ENCODE measurements at regions of chr1 and their contacts with region 1.

Region 1: GRCh38 chr1:184222652-184223052 is 164.2 kb upstream of the C1orf21 start:
- DNase-seq: peak; percentile 55
- ATAC-seq: peak; percentile 88
- H3K4me3 ChIP-seq: no peak overlapping the region; the same call in 1 of the 2 replicates
- H3K27ac ChIP-seq: no peak overlapping the region
- H3K4me1 ChIP-seq: no peaks in the 10 kb centered on the region
- H3K27me3 ChIP-seq: peaks cover 11% of the 10 kb centered on the region
- CTCF ChIP-seq: peak; percentile 89
- POLR2A ChIP-seq: no peak; the same call in 1 of the 2 replicates
- RAD21 ChIP-seq: peak; percentile 87

Region 2: GRCh38 chr1:183655562-183656075 is 567.0 kb before region 1 on chr1:
- CTCF ChIA-PET with region 1: interaction called, 3 read pairs
- POLR2A ChIA-PET with region 1: no interaction called
- dilution Hi-C with region 1: no loop called
- in situ Hi-C with region 1: no loop called
- intact Hi-C with region 1: loop called (anchors 10 kb)
- DNase-seq: peak; percentile 84
- ATAC-seq: peak; percentile 96
- H3K4me3 ChIP-seq: no peak overlapping the region
- H3K27ac ChIP-seq: no peak overlapping the region
- H3K4me1 ChIP-seq: peaks cover 6% of the 10 kb centered on the region
- H3K27me3 ChIP-seq: no peaks in the 10 kb centered on the region
- CTCF ChIP-seq: peak; percentile 92
- POLR2A ChIP-seq: 0 out of 2 replicates have a peak, but pooled peaks have one; percentile 32
- RAD21 ChIP-seq: peak; percentile 92

Region 3: DNA sequence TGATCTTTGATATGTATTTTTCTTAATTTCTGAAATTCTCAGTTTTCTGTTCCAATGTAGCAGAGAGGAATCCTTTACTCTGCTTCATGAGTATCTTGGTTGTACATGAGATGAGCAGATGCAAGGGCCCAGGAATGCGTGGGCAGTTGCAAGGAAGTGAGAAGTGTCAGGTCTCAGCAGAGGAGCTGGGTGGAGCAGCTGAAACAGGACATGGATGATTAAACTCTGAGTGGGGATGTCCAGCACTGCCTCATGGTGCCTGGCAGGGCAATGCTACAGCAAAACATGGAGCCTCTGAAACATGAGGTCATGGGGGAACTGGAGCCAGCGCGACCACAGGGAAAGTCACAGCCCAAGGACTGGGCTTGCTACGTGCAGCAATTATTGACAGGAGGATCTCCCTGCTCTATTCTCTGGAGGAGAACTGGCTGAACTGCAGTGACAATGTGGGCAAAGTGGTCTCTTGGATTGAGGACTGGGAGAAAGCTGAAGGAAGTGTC is 233.5 kb before region 1 on chr1:
- CTCF ChIA-PET with region 1: no interaction called
- POLR2A ChIA-PET with region 1: no interaction called
- dilution Hi-C with region 1: no loop called
- in situ Hi-C with region 1: no loop called
- intact Hi-C with region 1: no loop called
- DNase-seq: peak; percentile 95
- ATAC-seq: peak; percentile 91
- H3K4me3 ChIP-seq: no peak overlapping the region
- H3K27ac ChIP-seq: peak overlapping the region; percentile 32; the same call in 1 of the 2 replicates
- H3K4me1 ChIP-seq: peaks cover 14% of the 10 kb centered on the region
- H3K27me3 ChIP-seq: no peaks in the 10 kb centered on the region
- CTCF ChIP-seq: no peak
- POLR2A ChIP-seq: no peak
- RAD21 ChIP-seq: peak; percentile 10; the same call in 1 of the 2 replicates

Region 4: GRCh38 chr1:184075055-184076029 is 147.3 kb before region 1 on chr1:
- CTCF ChIA-PET with region 1: interaction called, 6 read pairs
- POLR2A ChIA-PET with region 1: no interaction called
- dilution Hi-C with region 1: no loop called
- in situ Hi-C with region 1: loop called (anchors 5 kb)
- intact Hi-C with region 1: loop called (anchors 1 kb)
- DNase-seq: peak; percentile 75
- ATAC-seq: peak; percentile 87
- H3K4me3 ChIP-seq: no peak overlapping the region
- H3K27ac ChIP-seq: no peak overlapping the region
- H3K4me1 ChIP-seq: peaks cover 3% of the 10 kb centered on the region; the same call in 1 of the 2 replicates
- H3K27me3 ChIP-seq: no peaks in the 10 kb centered on the region
- CTCF ChIP-seq: peak; percentile 91
- POLR2A ChIP-seq: peak; percentile 26; the same call in 1 of the 2 replicates
- RAD21 ChIP-seq: peak; percentile 98

Region 5: DNA sequence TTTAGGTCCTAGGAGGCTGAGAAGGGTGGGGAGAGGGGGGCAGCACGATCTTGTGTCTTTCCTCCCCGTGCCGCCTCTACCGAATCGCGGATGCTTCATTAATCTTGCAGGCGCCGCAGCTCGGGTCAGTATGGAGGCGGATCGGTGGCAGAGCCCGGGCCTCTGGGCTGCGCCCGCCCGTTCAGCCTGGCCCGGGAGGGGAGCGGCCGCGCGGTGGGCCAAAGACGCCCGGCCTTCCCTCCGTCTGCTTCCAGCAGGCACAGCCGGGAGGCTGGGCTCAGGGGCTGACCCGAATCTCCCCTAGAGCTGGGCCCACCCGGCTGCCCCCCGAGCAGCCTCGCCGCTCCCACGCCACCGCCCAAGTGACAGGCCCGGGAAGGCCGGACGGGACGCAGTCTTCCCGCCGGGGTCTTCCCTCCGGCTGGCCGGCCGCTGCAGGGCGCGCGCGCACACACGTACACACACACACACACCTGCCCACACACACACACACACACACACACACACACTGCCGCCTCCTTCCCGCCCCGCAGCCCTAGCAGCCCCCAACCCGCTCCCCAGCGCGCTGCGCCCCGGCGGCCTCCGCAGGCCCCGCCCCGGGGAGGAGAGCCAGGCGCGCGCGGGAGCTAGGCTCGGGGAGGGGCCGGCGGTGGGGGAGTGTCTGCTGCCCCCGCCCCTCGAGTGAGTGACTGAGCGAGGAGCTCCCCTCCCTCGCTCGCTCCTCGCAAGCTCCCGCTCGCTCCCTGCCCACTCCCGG is 163.8 kb after region 1 on chr1 and contains the start of gene C1orf21:
- CTCF ChIA-PET with region 1: no interaction called
- POLR2A ChIA-PET with region 1: no interaction called
- dilution Hi-C with region 1: no loop called
- in situ Hi-C with region 1: no loop called
- intact Hi-C with region 1: loop called (anchors 5 kb)
- DNase-seq: peak; percentile 84
- ATAC-seq: peak; percentile 96
- H3K4me3 ChIP-seq: peak within 1 kb of the TSS; percentile 61
- H3K27ac ChIP-seq: peak within 1 kb of the TSS; percentile 60
- H3K4me1 ChIP-seq: peaks cover 4% of the 10 kb centered on the region; the same call in 1 of the 2 replicates
- H3K27me3 ChIP-seq: peaks cover 7% of the 10 kb centered on the region
- CTCF ChIP-seq: no peak
- POLR2A ChIP-seq: no peak; the same call in 1 of the 2 replicates
- RAD21 ChIP-seq: no peak
- total RNA-seq, gene C1orf21: 9.9 and 15.8 TPM in 2 replicates

Region 6: GRCh38 chr1:184610876-184611595 is 388.4 kb after region 1 on chr1:
- CTCF ChIA-PET with region 1: no interaction called
- POLR2A ChIA-PET with region 1: interaction called, 10 read pairs
- dilution Hi-C with region 1: no loop called
- in situ Hi-C with region 1: no loop called
- intact Hi-C with region 1: no loop called
- DNase-seq: no peak
- ATAC-seq: peak; percentile 46
- H3K4me3 ChIP-seq: no peak overlapping the region
- H3K27ac ChIP-seq: no peak overlapping the region
- H3K4me1 ChIP-seq: peaks cover 1% of the 10 kb centered on the region; the same call in 1 of the 2 replicates
- H3K27me3 ChIP-seq: no peaks in the 10 kb centered on the region
- CTCF ChIP-seq: no peak
- POLR2A ChIP-seq: no peak
- RAD21 ChIP-seq: no peak

Measured in IMR-90 (cell line).